Activated B cell treated with CpG ODN at 0.5 μM for 24 hours (primary cell): ENCODE measurements at regions of chr5 and their contacts with region 1.

Region 1: GRCh38 chr5:181254707-181255106 is 6.2 kb downstream of the TRIM52 start:
- DNase-seq: no peak
- ATAC-seq: no peak
- H3K4me3 Mint-ChIP-seq: no peak overlapping the region
- H3K27ac Mint-ChIP-seq: no peak overlapping the region
- H3K4me1 Mint-ChIP-seq: peaks cover 62% of the 10 kb centered on the region
- H3K27me3 Mint-ChIP-seq: no peaks in the 10 kb centered on the region
- CTCF ChIP-seq: no peak

Region 2: GRCh38 chr5:180736536-180736935 is 518.2 kb before region 1 on chr5:
- CTCF ChIA-PET with region 1: no interaction called
- POLR2A ChIA-PET with region 1: no interaction called
- intact Hi-C with region 1: no loop called
- DNase-seq: no peak
- ATAC-seq: no peak
- H3K4me3 Mint-ChIP-seq: no peak overlapping the region
- H3K27ac Mint-ChIP-seq: no peak overlapping the region
- H3K4me1 Mint-ChIP-seq: no peaks in the 10 kb centered on the region
- H3K27me3 Mint-ChIP-seq: peaks cover 16% of the 10 kb centered on the region
- CTCF ChIP-seq: no peak

Region 3: GRCh38 chr5:180982008-180982741 is 272.5 kb before region 1 on chr5:
- CTCF ChIA-PET with region 1: no interaction called
- POLR2A ChIA-PET with region 1: interaction called, 10 read pairs
- intact Hi-C with region 1: no loop called
- DNase-seq: no peak
- ATAC-seq: no peak
- H3K4me3 Mint-ChIP-seq: no peak overlapping the region
- H3K27ac Mint-ChIP-seq: no peak overlapping the region
- H3K4me1 Mint-ChIP-seq: peaks cover 8% of the 10 kb centered on the region
- H3K27me3 Mint-ChIP-seq: peaks cover 7% of the 10 kb centered on the region
- CTCF ChIP-seq: no peak

Region 4: DNA sequence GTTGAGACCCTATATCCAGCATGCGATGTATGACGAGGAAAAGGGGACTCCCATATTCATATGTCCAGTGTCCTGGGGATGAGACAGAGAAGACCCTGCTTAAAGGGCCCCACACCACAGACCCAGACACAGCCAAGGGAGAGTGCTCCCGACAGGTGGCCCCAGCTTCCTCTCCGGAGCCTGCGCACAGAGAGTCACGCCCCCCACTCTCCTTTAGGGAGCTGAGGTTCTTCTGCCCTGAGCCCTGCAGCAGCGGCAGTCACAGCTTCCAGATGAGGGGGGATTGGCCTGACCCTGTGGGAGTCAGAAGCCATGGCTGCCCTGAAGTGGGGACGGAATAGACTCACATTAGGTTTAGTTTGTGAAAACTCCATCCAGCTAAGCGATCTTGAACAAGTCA is 248.9 kb before region 1 on chr5:
- CTCF ChIA-PET with region 1: no interaction called
- POLR2A ChIA-PET with region 1: no interaction called
- intact Hi-C with region 1: no loop called
- DNase-seq: no peak
- ATAC-seq: no peak
- H3K4me3 Mint-ChIP-seq: no peak overlapping the region
- H3K27ac Mint-ChIP-seq: no peak overlapping the region
- H3K4me1 Mint-ChIP-seq: peaks cover 6% of the 10 kb centered on the region
- H3K27me3 Mint-ChIP-seq: peaks cover 8% of the 10 kb centered on the region
- CTCF ChIP-seq: no peak